MCF 10A (cell line): ENCODE measurements at regions of chr2 and their contacts with region 1.

Region 1: GRCh38 chr2:9112079-9112721 is 94.4 kb upstream of the ASAP2 start:
- DNase-seq: peak; percentile 86
- H3K4me3 Mint-ChIP-seq: peak overlapping the region; percentile 51
- H3K27ac Mint-ChIP-seq: peak overlapping the region; percentile 84
- H3K4me1 Mint-ChIP-seq: peaks cover 26% of the 10 kb centered on the region
- H3K27me3 Mint-ChIP-seq: no peaks in the 10 kb centered on the region
- CTCF ChIP-seq: no peak

Region 2: DNA sequence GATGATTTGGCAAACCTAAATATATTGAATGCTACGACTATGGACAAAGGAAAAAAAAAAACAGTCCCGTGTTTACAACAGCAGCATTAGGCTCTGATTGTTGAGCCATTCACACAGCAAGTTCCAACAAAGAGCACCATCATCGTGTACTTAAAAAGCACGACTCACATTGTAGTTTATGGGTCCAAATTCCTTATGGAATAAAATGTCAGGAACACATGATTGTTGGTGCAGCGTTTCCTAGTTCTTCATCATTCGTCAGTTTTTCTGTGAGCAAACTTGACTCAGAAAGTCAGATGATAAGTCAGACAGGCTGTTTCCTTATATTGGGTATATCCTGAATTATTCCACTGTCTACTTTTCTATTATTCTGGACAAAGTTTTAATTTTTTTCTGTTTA is 264.8 kb before region 1 on chr2:
- CTCF ChIA-PET with region 1: no interaction called
- POLR2A ChIA-PET with region 1: no interaction called
- intact Hi-C with region 1: no loop called
- DNase-seq: no peak
- H3K4me3 Mint-ChIP-seq: no peak overlapping the region
- H3K27ac Mint-ChIP-seq: no peak overlapping the region
- H3K4me1 Mint-ChIP-seq: no peaks in the 10 kb centered on the region
- H3K27me3 Mint-ChIP-seq: no peaks in the 10 kb centered on the region
- CTCF ChIP-seq: no peak

Region 3: GRCh38 chr2:9057939-9058761 is 54.0 kb before region 1 on chr2:
- CTCF ChIA-PET with region 1: interaction called, 3 read pairs
- POLR2A ChIA-PET with region 1: interaction called, 3 read pairs
- intact Hi-C with region 1: loop called (anchors 10 kb)
- DNase-seq: peak; percentile 88
- H3K4me3 Mint-ChIP-seq: no peak overlapping the region
- H3K27ac Mint-ChIP-seq: peak overlapping the region; percentile 57
- H3K4me1 Mint-ChIP-seq: peaks cover 22% of the 10 kb centered on the region
- H3K27me3 Mint-ChIP-seq: no peaks in the 10 kb centered on the region
- CTCF ChIP-seq: no peak